CD4-positive, alpha-beta memory T cell (primary cell): ENCODE measurements at regions of chr3 and their contacts with region 1.

Region 1: GRCh38 chr3:52536369-52537164 is at the start of gene UQCC5:
- DNase-seq: peak; percentile 96 to 99 (median 98)
- H3K4me3 ChIP-seq: peak within 1 kb of the TSS; percentile 83 to 95
- H3K4me3 Mint-ChIP-seq: peak within 1 kb of the TSS; percentile 98 to 100 (median 100)
- H3K27ac ChIP-seq: peak within 1 kb of the TSS; percentile 74
- H3K27ac Mint-ChIP-seq: peak within 1 kb of the TSS; percentile 94 to 100 (median 99)
- H3K4me1 ChIP-seq: peaks cover 46% of the 10 kb centered on the region
- H3K4me1 Mint-ChIP-seq: peaks cover 24 to 68% (median 49%) of the 10 kb centered on the region in 4 donors
- H3K27me3 ChIP-seq: no peaks in the 10 kb centered on the region
- H3K27me3 Mint-ChIP-seq: no peaks in the 10 kb centered on the region
- total RNA-seq, gene UQCC5: 12.1 to 13.2 TPM

Region 2: DNA sequence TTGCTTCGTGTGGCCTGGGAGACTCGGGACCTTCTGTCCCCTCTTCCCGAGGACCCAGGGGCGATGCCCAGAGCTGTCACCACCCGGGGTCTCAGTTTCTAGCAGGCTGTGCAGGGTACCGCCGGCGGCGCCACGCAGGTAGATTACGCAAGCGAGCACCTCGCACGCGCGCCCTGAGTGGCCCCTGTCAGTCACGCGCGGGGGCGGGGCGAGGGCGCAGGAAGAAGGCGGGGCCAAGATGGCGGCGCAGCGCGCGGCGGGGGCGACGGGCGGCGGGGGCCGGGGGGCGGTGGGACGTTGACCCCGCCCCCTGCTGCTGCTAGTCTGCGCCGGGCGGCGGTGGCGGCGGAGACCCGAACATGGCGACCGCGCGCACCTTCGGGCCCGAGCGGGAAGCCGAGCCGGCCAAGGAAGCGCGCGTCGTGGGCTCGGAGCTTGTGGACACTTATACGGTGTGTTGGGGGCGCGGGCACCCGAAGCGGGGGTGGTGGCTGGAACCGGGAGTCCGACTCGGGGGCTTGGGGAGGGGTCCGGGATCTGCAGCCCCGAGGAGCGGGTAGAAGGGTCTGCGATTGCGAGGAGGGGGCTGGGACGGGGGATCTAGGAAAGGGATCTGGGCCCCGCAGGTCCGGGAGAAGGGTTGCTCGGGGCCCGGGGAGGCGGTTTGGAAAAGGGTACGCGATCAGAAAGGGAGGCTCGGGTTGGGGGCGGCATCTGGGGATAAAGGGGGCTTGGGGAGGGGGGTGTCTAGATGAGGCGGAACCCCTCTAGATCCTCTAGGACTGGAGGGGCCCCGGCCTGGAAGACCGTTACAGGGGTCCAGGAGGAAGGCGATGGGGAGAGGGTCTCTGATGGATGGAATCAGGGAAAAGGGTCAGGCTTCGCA is 81.0 kb before region 1 on chr3 and contains the start of gene NISCH:
- CTCF ChIA-PET with region 1: no interaction called
- POLR2A ChIA-PET with region 1: interaction called, 4 read pairs
- intact Hi-C with region 1: loop called (anchors 1 kb)
- DNase-seq: peak; percentile 93 to 98 (median 96)
- H3K4me3 ChIP-seq: peak within 1 kb of the TSS; percentile 91 to 97
- H3K4me3 Mint-ChIP-seq: peak within 1 kb of the TSS; percentile 91 to 97 (median 94)
- H3K27ac ChIP-seq: peak within 1 kb of the TSS; percentile 93
- H3K27ac Mint-ChIP-seq: peak within 1 kb of the TSS; percentile 97 to 99 (median 99)
- H3K4me1 ChIP-seq: peaks cover 36% of the 10 kb centered on the region
- H3K4me1 Mint-ChIP-seq: peaks cover 25 to 60% (median 35%) of the 10 kb centered on the region in 4 donors
- H3K27me3 ChIP-seq: no peaks in the 10 kb centered on the region
- H3K27me3 Mint-ChIP-seq: no peaks in the 10 kb centered on the region
- total RNA-seq, gene NISCH: 189 to 205 TPM

Region 3: GRCh38 chr3:52574056-52574965 is 37.7 kb after region 1 on chr3:
- CTCF ChIA-PET with region 1: no interaction called
- POLR2A ChIA-PET with region 1: no interaction called
- intact Hi-C with region 1: no loop called
- DNase-seq: no peak
- H3K4me3 ChIP-seq: no peak overlapping the region
- H3K4me3 Mint-ChIP-seq: no peak overlapping the region
- H3K27ac ChIP-seq: no peak overlapping the region
- H3K27ac Mint-ChIP-seq: peak overlapping the region in 4 of 7 donors; percentile 22 to 60 (median 30)
- H3K4me1 ChIP-seq: no peaks in the 10 kb centered on the region
- H3K4me1 Mint-ChIP-seq: peaks cover 0 to 1% (median 0%) of the 10 kb centered on the region in 4 donors
- H3K27me3 ChIP-seq: no peaks in the 10 kb centered on the region
- H3K27me3 Mint-ChIP-seq: no peaks in the 10 kb centered on the region